Vagina (tissue), 2 donors: ENCODE measurements at regions of chr1 and their contacts with region 1.

Region 1: GRCh38 chr1:46667782-46668760 is at the start of gene ATPAF1:
- DNase-seq: no peak
- H3K4me3 ChIP-seq: peak within 1 kb of the TSS; percentile 90 to 97
- H3K27ac ChIP-seq: peak within 1 kb of the TSS; percentile 84
- H3K4me1 ChIP-seq: peaks cover 29% of the 10 kb centered on the region
- H3K27me3 ChIP-seq: no peaks in the 10 kb centered on the region
- CTCF ChIP-seq: no peak
- POLR2A ChIP-seq: no peak
- total RNA-seq, gene ATPAF1: 37.1 TPM

Region 2: DNA sequence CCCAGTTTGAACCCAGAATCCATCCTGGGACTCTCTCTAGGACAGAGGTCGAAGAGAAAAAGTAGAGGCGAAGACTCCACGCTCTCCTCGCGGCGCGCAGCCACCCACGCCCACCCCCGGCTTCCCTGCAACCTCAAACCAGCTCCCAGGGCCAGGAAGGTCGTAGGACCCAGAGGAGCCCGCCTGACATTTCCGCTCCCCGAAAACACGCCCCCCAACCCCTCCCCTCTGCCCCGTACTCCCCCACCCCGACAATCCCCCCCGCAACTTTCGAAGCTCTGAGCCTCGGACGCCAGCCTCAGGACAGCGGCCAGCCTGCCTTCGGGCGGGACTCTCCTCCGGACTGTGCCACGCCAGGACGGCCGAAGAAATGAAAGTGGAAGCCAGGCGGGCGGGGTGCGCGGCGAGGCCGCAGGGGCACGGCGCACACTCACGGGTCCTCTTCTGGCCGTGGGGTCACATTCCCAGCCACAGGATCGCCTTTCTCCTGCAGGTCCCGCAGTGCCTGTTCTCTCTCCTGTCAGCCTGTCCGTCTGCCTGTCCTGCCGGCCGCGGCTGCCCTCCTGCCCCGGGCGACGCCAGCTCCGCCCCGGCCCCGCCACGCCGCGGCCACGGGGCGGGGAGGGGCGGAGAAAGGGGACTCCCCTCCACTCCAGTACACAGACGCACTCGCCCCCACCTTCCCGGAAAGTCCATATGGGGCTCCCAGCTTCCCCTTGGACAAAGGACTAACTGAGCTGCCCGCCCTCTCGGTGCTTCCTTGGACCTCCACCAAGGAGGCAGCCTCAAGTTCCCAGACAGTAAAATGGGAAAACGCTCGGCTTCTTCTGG is 51.6 kb before region 1 on chr1 and contains the start of gene MOB3C:
- intact Hi-C with region 1: loop called (anchors 5 kb)
- DNase-seq: peak in 1 of 2 donors; percentile 95
- H3K4me3 ChIP-seq: peak within 1 kb of the TSS; percentile 77 to 79
- H3K27ac ChIP-seq: peak within 1 kb of the TSS; percentile 92
- H3K4me1 ChIP-seq: peaks cover 61% of the 10 kb centered on the region
- H3K27me3 ChIP-seq: no peaks in the 10 kb centered on the region
- CTCF ChIP-seq: no peak
- POLR2A ChIP-seq: peak in 1 of 2 donors; percentile 65
- total RNA-seq, gene MOB3C: 33.9 TPM

Region 3: DNA sequence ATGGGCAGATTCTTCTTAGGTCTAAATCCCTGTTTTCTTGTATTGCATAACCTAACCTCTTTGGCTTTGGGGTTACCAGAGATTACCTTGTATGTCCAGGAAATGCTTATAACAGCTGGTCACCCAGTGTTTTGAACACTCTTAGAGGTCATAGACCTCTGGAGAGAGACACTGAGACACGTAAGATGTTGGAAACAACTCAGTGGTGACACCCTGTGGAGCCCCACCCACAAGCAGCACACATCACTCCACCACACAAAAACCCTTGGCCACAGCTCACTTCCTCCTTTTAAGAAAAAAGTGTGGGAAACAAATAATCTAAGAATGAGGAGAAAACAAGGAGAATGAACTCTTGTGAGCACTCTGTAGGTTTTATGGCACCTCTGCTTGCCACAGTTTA is 104.5 kb after region 1 on chr1:
- intact Hi-C with region 1: no loop called
- DNase-seq: peak in 1 of 2 donors; percentile 54
- H3K4me3 ChIP-seq: no peak overlapping the region
- H3K27ac ChIP-seq: no peak overlapping the region
- H3K4me1 ChIP-seq: no peaks in the 10 kb centered on the region
- H3K27me3 ChIP-seq: no peaks in the 10 kb centered on the region
- CTCF ChIP-seq: no peak
- POLR2A ChIP-seq: no peak

Region 4: DNA sequence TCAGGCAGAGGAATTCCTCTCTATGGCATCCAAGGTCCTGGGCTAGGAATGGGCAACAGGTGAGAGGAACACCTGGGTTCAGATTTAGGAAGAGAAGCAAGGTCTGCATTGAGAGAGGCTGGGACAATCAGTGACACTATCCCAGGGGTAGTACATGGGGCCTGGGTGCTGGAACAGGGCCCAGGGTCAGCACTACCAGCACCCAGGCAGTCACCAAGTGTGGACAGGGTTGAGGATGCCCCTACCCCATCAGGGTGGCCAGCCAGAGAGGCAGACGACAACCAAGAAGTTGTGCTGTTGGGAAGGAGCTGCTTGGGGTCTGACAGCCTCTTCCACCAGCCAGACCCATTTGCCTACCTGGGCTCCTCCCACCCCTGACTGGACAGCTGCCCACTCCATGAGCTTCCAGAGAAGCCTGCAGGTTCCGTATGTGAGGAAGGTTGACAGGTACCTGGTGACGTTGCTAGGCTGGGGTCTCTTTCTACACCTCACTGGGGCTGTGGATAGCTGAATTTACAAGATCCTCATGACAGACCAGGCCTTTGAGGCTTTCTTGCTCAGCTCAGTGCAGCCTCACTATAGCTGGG is 259.3 kb after region 1 on chr1:
- intact Hi-C with region 1: no loop called
- DNase-seq: no peak
- H3K4me3 ChIP-seq: no peak overlapping the region
- H3K27ac ChIP-seq: no peak overlapping the region
- H3K4me1 ChIP-seq: no peaks in the 10 kb centered on the region
- H3K27me3 ChIP-seq: no peaks in the 10 kb centered on the region
- CTCF ChIP-seq: no peak
- POLR2A ChIP-seq: no peak